CD8-positive, alpha-beta T cell (primary cell): ENCODE measurements at regions of chr2 and their contacts with region 1.

Region 1: GRCh38 chr2:61065715-61066709 is at the start of gene SANBR:
- DNase-seq: peak; percentile 65 to 92 (median 79)
- ATAC-seq: peak; percentile 97
- H3K4me3 ChIP-seq: peak within 1 kb of the TSS; percentile 50 to 59
- H3K4me3 Mint-ChIP-seq: peak within 1 kb of the TSS; percentile 94
- H3K27ac ChIP-seq: no peak within 1 kb of the TSS
- H3K27ac Mint-ChIP-seq: peak within 1 kb of the TSS; percentile 82
- H3K4me1 ChIP-seq: peaks cover 4% of the 10 kb centered on the region
- H3K4me1 Mint-ChIP-seq: peaks cover 7% of the 10 kb centered on the region
- H3K27me3 ChIP-seq: no peaks in the 10 kb centered on the region
- H3K27me3 Mint-ChIP-seq: no peaks in the 10 kb centered on the region
- CTCF ChIP-seq: no peak
- total RNA-seq, gene SANBR: 0.52 to 0.67 TPM

Region 2: DNA sequence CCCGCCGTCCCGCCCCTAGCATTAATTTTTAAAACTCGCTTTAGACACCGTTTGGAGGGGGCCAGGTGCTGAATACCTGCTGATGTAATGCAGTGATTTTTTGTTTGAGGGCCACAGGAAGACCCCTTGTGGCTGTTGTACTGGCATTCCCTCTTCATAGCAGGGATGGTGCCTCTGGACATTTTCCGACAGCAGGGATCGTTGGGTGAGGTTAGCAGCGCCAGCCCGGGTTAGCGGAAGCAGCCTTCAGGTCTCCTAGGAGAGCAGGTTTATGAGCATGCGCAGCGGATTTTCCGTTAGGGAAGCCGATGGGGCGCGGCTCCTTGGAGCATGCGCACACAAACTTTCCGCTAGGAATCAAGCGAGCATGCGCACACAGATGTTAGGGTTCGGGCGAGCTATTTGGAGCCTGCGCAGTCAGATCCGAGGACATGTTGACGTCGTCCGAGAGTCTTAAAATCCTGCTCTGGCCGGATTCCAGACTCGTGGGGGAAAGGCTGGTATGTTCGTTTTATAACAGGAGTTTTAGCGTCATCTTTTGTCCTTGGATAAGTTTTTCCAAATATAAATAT is 78.8 kb after region 1 on chr2:
- CTCF ChIA-PET with region 1: no interaction called
- POLR2A ChIA-PET with region 1: interaction called, 4 read pairs
- intact Hi-C with region 1: loop called (anchors 5 kb)
- DNase-seq: peak; percentile 80 to 98 (median 93)
- ATAC-seq: peak; percentile 94
- H3K4me3 ChIP-seq: peak overlapping the region; percentile 77 to 94
- H3K4me3 Mint-ChIP-seq: peak overlapping the region; percentile 94
- H3K27ac ChIP-seq: peak overlapping the region; percentile 68 to 85
- H3K27ac Mint-ChIP-seq: peak overlapping the region; percentile 95
- H3K4me1 ChIP-seq: peaks cover 5% of the 10 kb centered on the region
- H3K4me1 Mint-ChIP-seq: peaks cover 15% of the 10 kb centered on the region
- H3K27me3 ChIP-seq: no peaks in the 10 kb centered on the region
- H3K27me3 Mint-ChIP-seq: no peaks in the 10 kb centered on the region
- CTCF ChIP-seq: no peak